PC-3 (cell line): ENCODE measurements at regions of chr21 and their contacts with region 1.

Region 1: GRCh38 chr21:36976882-36977651 is 10.6 kb upstream of the HLCS start:
- DNase-seq: peak; percentile 96
- ATAC-seq: peak; percentile 66
- H3K4me3 ChIP-seq: peak overlapping the region; percentile 29
- H3K27ac ChIP-seq: peak overlapping the region; percentile 76
- H3K4me1 ChIP-seq: peaks cover 28% of the 10 kb centered on the region
- H3K27me3 ChIP-seq: no peaks in the 10 kb centered on the region
- CTCF ChIP-seq: peak; percentile 98

Region 2: DNA sequence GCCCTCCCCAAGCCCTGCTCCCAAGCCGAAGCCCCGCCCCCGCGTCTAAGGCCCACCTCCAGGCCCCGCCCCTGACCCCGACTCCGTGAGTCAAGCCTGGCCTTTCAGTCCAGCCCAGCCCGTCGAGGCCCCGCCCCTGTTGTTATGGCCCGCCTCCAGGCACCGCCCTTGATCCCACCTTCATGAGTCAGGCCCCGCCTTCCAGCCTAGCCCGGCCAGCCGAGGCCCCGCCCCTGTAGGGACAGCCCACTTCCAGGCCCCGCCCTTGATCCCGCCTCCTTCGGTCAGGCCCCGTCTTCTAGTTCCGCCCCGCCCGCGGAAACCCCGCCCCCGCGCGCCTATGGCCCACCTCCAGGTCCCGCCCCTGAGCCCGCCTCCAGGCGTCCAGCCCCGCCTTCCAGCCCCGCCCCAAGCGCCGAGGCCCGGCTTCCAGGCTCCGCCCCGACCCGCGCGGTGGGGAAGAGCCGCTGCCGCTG is 820.7 kb before region 1 on chr21:
- CTCF ChIA-PET with region 1: no interaction called
- POLR2A ChIA-PET with region 1: interaction called, 10 read pairs
- intact Hi-C with region 1: no loop called
- DNase-seq: peak; percentile 99
- ATAC-seq: peak; percentile 87
- H3K4me3 ChIP-seq: peak overlapping the region; percentile 96
- H3K27ac ChIP-seq: no peak overlapping the region
- H3K4me1 ChIP-seq: peaks cover 19% of the 10 kb centered on the region
- H3K27me3 ChIP-seq: no peaks in the 10 kb centered on the region
- CTCF ChIP-seq: no peak

Region 3: DNA sequence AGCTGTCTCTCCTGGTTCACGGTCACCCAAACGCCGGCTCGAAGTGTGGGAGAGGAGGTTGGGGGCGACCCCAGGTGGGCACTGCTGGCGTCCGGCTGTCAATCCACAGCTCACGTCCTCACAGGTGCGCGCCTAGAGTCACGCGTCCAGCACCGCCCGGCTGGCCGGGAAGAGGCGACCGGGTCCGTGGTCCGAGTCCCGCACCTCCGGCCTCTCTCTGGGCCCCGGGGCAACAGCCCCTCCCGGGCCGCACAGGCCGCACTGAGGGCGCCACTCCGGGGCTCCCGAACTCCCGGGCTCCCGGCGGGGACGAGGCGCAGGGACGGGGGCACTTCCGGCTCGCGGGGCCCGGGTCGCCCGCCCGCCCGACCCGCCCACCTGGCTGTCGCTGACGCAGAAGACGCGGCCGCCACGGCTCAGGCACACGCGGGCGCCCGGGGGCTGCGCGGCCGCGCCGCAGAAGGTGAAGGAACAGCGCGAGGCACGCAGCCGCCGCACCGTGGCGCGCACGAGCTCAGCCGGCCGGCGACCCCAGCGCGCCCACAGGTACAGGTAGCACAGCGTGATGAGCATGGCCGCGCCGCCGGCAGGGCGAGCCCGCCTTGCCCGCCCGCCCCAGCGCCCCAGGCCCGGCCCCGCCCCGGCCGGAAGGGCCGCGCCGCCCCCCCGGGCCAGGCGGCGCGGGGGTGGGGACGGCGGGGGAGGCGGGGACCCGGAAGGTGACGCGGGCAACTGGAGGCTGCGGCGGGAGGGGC is 10.8 kb before region 1 on chr21 and contains the start of gene HLCS:
- CTCF ChIA-PET with region 1: interaction called, 16 read pairs
- POLR2A ChIA-PET with region 1: interaction called, 4 read pairs
- intact Hi-C with region 1: no loop called
- DNase-seq: peak; percentile 85
- ATAC-seq: peak; percentile 88
- H3K4me3 ChIP-seq: peak within 1 kb of the TSS; percentile 95
- H3K27ac ChIP-seq: peak within 1 kb of the TSS; percentile 71
- H3K4me1 ChIP-seq: peaks cover 20% of the 10 kb centered on the region
- H3K27me3 ChIP-seq: no peaks in the 10 kb centered on the region
- CTCF ChIP-seq: no peak
- total RNA-seq, gene HLCS: 31.7 and 44.1 TPM in 2 replicates

Region 4: GRCh38 chr21:36989699-36990507 is 12.8 kb after region 1 on chr21:
- CTCF ChIA-PET with region 1: interaction called, 47 read pairs
- POLR2A ChIA-PET with region 1: interaction called, 5 read pairs
- intact Hi-C with region 1: loop called (anchors 1 kb)
- DNase-seq: peak; percentile 95
- ATAC-seq: peak; percentile 77
- H3K4me3 ChIP-seq: peak overlapping the region; percentile 72
- H3K27ac ChIP-seq: peak overlapping the region; percentile 89
- H3K4me1 ChIP-seq: peaks cover 42% of the 10 kb centered on the region
- H3K27me3 ChIP-seq: no peaks in the 10 kb centered on the region
- CTCF ChIP-seq: peak; percentile 83

Region 5: DNA sequence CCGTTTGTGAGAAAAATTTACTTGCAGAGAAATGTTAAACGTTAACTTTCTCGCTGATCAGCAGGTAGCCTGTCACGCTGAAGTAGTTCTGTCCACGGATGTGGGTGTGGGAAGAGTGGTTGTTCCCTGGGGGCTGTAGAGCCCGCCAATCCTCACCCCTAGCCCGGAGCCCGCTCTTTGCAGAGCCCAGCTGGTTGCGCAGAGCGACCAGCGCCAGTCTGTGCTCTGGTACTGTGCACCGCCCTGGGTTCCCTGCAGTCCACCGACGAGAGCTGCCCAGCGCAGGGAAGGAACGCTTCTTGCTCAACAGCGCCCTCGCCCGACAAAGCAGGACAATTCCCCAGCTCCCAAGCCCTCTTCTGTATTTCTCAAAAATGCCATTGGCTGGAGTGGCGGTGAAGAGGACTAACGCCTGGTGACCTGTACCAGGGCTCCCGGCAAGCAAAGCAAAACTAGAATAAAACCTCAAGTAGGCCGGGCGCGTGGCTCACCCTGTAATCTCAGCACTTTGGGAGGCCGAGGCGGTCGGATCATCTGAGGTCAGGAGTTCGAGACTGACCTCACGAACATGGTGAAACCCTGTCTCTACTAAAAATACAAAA is 32.8 kb after region 1 on chr21:
- CTCF ChIA-PET with region 1: interaction called, 37 read pairs
- POLR2A ChIA-PET with region 1: interaction called, 3 read pairs
- intact Hi-C with region 1: loop called (anchors 1 kb)
- DNase-seq: peak; percentile 93
- ATAC-seq: peak; percentile 95
- H3K4me3 ChIP-seq: peak overlapping the region; percentile 76
- H3K27ac ChIP-seq: no peak overlapping the region
- H3K4me1 ChIP-seq: peaks cover 13% of the 10 kb centered on the region; the same call in 1 of the 2 replicates
- H3K27me3 ChIP-seq: no peaks in the 10 kb centered on the region
- CTCF ChIP-seq: peak; percentile 92

Region 6: GRCh38 chr21:37072988-37073416 is 95.9 kb after region 1 on chr21 and contains the starts of genes PIGP and TTC3:
- CTCF ChIA-PET with region 1: no interaction called
- POLR2A ChIA-PET with region 1: no interaction called
- intact Hi-C with region 1: loop called (anchors 1 kb)
- DNase-seq: peak; percentile 96
- ATAC-seq: peak; percentile 74
- H3K4me3 ChIP-seq: peak within 1 kb of the TSS; percentile 84
- H3K27ac ChIP-seq: peak within 1 kb of the TSS; percentile 81
- H3K4me1 ChIP-seq: peaks cover 21% of the 10 kb centered on the region
- H3K27me3 ChIP-seq: no peaks in the 10 kb centered on the region
- CTCF ChIP-seq: no peak
- total RNA-seq, gene PIGP: 17.1 and 20.1 TPM in 2 replicates
- total RNA-seq, gene TTC3: 121 and 140 TPM in 2 replicates

Region 7: DNA sequence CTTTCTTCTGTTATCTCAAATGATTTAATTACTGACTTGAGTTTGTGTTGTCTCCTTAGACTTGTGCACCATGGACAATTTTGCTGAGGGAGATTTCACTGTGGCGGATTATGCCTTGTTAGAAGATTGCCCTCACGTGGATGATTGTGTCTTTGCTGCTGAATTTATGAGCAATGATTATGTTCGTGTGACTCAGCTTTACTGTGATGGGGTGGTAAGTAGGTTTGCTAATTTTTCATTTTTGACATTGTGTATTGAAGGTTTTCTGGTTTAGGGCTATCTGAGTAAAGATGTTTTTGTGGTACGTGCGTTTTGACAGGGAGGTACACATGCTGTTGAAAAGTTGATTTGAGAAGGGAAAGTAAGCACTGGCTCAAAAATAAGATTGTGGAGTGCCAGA is 110.1 kb after region 1 on chr21:
- CTCF ChIA-PET with region 1: interaction called, 12 read pairs
- POLR2A ChIA-PET with region 1: no interaction called
- intact Hi-C with region 1: loop called (anchors 1 kb)
- DNase-seq: peak; percentile 78
- ATAC-seq: peak; percentile 86
- H3K4me3 ChIP-seq: no peak overlapping the region
- H3K27ac ChIP-seq: no peak overlapping the region
- H3K4me1 ChIP-seq: peaks cover 8% of the 10 kb centered on the region
- H3K27me3 ChIP-seq: no peaks in the 10 kb centered on the region
- CTCF ChIP-seq: peak; percentile 79